BJ (cell line): ENCODE measurements at regions of chr3 and their contacts with region 1.

Region 1: GRCh38 chr3:168040607-168041208 is 55.0 kb downstream of the GOLIM4 start:
- DNase-seq: no peak
- H3K4me3 ChIP-seq: no peak overlapping the region
- H3K27me3 ChIP-seq: no peaks in the 10 kb centered on the region
- CTCF ChIP-seq: peak; percentile 78

Region 2: DNA sequence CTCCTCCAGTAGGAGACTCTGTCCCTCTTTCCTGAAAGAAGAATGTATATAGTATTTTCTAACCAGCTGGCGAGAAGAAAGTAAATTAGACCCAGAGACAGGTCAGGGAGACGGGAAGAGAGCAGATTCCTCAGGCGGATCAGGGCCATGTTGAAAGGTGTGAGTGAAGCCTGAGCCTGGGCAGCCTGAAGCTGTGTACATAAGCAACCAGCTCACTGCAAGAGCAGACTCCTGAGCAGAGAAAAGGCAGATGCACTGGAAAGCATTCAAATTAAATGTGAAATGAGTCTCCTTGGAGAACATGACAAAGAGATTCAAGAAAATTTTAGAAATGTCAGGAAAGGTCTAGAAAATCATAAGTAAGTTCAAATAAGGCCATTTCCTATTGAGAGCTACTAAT is 110.7 kb before region 1 on chr3:
- CTCF ChIA-PET with region 1: interaction called, 22 read pairs
- POLR2A ChIA-PET with region 1: no interaction called
- DNase-seq: no peak
- H3K4me3 ChIP-seq: no peak overlapping the region
- H3K27me3 ChIP-seq: no peaks in the 10 kb centered on the region
- CTCF ChIP-seq: no peak

Region 3: DNA sequence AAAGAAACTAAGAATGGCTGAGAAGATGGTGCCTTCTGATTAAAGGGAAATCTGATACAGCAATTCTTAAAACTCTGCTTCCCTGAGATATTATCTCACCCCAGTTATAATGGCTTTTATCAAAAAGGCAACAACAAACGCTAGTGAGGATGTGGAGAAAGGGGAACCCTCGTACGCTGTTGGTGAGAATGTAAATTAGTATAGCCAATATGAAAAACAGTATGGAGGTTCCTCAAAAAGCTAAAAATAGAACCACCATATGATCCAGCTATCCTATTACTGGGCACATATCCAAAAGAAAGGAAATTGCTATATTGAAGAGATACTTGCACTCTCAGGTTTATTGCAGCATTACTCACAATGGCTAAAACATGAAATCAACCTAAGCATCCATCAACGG is 10.1 kb before region 1 on chr3:
- CTCF ChIA-PET with region 1: interaction called, 33 read pairs
- POLR2A ChIA-PET with region 1: no interaction called
- DNase-seq: no peak
- H3K4me3 ChIP-seq: no peak overlapping the region
- H3K27me3 ChIP-seq: no peaks in the 10 kb centered on the region
- CTCF ChIP-seq: no peak